Activated naive CD4-positive, alpha-beta T cell treated with anti-CD3 and anti-CD28 coated beads for 36 hours (primary cell): ENCODE measurements at regions of chr12 and their contacts with region 1.

Region 1: DNA sequence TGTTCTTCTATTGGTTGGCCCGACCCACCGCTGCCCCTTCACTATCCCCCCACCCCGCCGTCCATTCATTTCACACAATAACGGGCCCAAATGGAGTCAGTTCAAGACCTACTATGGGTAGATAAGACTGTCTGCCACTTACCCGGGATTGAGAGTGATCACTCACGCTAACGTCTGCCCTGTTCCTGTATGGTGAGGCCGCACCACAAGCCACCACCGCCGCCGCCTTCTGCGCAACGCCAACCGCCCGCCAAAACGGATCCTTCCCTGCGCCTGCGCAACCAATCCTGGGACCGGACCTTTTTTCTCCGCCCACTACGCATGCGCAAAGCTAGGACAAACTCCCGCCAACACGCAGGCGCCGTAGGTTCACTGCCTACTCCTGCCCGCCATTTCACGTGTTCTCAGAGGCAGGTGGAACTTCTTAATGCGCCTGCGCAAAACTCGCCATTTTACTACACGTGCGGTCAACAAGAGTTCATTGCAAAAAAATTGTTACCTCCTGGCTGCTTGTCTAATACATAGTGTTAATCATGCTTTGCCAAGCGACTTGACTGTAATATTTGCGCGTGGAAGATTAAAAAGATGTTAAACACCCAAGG is at the start of gene CBX5:
- DNase-seq: peak; percentile 100
- H3K4me3 Mint-ChIP-seq: no peak within 1 kb of the TSS
- H3K27ac Mint-ChIP-seq: no peak within 1 kb of the TSS
- H3K4me1 Mint-ChIP-seq: peaks cover 53% of the 10 kb centered on the region
- H3K27me3 Mint-ChIP-seq: no peaks in the 10 kb centered on the region
- total RNA-seq, gene CBX5: 169 to 173 TPM

Region 2: GRCh38 chr12:53379389-53380103 is 900.4 kb before region 1 on chr12:
- CTCF ChIA-PET with region 1: no interaction called
- intact Hi-C with region 1: loop called (anchors 1 kb)
- DNase-seq: peak; percentile 99
- H3K4me3 Mint-ChIP-seq: no peak overlapping the region
- H3K27ac Mint-ChIP-seq: no peak overlapping the region
- H3K4me1 Mint-ChIP-seq: peaks cover 48% of the 10 kb centered on the region
- H3K27me3 Mint-ChIP-seq: no peaks in the 10 kb centered on the region

Region 3: GRCh38 chr12:54082397-54082892 is 197.5 kb before region 1 on chr12:
- CTCF ChIA-PET with region 1: no interaction called
- intact Hi-C with region 1: loop called (anchors 5 kb)
- DNase-seq: peak; percentile 58
- H3K4me3 Mint-ChIP-seq: peak overlapping the region; percentile 75
- H3K27ac Mint-ChIP-seq: peak overlapping the region; percentile 10
- H3K4me1 Mint-ChIP-seq: peaks cover 23% of the 10 kb centered on the region
- H3K27me3 Mint-ChIP-seq: no peaks in the 10 kb centered on the region

Region 4: DNA sequence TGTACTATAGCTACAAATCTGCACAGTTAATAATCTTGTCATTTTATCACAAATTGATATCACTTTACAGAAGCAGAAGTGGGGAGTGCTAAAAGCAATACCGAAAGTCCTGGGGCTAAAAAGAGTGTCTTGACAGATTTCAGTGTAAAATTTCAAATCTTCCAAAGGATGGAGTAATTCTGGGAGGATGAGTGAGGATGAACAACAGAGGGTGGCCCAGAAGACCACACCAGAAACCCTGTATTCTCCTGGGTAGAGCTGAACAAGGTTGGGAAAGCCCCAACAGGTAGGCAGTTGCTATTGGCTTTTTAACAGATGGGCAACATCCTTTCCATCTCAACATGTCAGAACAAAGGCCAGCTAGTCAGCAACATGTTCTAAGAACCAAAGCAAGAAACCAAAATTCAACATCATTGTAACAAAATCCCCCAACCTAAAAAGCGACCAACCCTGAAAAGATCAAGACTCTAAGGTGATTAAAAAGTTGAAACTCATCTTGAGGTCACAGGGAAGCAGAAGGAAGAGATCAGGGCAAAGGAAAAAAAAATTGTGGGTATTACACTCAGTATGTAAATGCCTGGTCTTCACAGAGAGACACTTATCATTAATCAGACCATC is 38.9 kb before region 1 on chr12:
- CTCF ChIA-PET with region 1: no interaction called
- intact Hi-C with region 1: loop called (anchors 1 kb)
- DNase-seq: peak; percentile 16
- H3K4me3 Mint-ChIP-seq: no peak overlapping the region
- H3K27ac Mint-ChIP-seq: peak overlapping the region; percentile 80
- H3K4me1 Mint-ChIP-seq: peaks cover 16% of the 10 kb centered on the region
- H3K27me3 Mint-ChIP-seq: no peaks in the 10 kb centered on the region

Region 5: DNA sequence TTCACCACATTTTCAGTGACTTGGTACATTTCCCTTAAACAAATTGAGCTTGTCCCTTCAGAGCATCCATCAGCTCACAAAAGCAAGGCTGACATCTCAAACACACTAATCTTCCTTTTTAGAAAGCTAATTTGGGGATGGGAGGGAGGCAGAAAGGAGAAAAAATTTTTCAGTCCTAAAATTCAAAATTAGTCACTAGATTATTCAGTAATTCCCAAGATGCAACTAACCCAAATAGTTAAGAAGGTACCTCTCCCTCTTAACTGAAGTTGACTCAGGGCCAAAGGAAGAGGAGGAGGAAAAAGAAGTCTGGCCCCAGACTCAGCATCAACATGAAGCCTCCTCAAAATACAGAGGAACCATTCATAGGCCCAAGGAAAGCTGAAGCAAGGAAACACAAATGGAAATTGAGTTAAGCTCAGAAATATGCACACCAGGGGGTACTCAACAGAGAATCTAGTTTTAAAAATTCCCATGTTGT is 21.7 kb before region 1 on chr12:
- CTCF ChIA-PET with region 1: no interaction called
- intact Hi-C with region 1: no loop called
- DNase-seq: no peak
- H3K4me3 Mint-ChIP-seq: no peak overlapping the region
- H3K27ac Mint-ChIP-seq: no peak overlapping the region
- H3K4me1 Mint-ChIP-seq: peaks cover 35% of the 10 kb centered on the region
- H3K27me3 Mint-ChIP-seq: no peaks in the 10 kb centered on the region

Region 6: DNA sequence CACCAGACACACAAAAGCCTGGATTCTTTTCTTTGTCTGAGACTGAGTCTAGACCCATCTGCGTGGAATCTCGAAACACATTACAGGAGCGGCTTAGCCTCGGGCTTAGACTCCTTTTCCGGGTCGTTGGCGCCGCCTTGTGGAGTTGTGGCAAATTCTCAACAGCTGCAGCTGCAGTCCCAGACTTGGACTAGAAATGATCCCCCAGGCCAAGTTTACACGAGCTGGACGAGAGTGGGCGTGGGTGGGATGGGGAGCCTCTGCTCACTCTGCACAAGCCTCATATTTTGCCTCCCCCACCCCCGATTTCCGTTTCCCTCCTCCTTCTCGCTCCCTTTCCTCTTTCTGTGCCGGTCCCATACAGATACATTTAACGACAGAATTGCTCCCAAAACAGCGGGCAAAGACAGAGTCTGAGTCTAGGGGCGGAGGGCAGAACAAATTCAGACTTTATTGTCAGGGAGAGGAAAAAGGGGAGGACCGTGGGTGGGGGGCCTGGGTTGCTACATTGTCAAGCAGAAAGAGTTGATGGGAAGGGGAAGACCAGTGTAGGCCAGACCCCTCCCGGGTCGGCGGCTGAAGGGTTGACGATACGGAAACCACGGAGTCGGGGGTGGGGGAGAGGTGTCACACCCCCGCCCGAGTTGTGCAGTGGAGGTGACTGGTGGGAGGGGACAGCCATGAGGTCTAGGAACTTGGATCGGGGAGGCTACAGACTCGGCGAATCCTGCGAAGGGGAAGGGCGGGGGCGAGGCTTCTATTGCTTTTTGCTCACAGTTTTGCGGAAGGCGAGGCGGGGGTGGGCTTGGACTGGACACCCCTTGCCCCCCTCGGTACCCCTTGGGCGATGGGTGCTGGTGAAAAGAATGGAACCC is 89.0 kb after region 1 on chr12:
- CTCF ChIA-PET with region 1: no interaction called
- intact Hi-C with region 1: loop called (anchors 1 kb)
- DNase-seq: peak; percentile 97
- H3K4me3 Mint-ChIP-seq: peak overlapping the region; percentile 23
- H3K27ac Mint-ChIP-seq: no peak overlapping the region
- H3K4me1 Mint-ChIP-seq: peaks cover 41% of the 10 kb centered on the region
- H3K27me3 Mint-ChIP-seq: no peaks in the 10 kb centered on the region

Region 7: GRCh38 chr12:54984658-54985376 is 704.9 kb after region 1 on chr12 and contains the start of gene TESPA1:
- CTCF ChIA-PET with region 1: no interaction called
- intact Hi-C with region 1: loop called (anchors 1 kb)
- DNase-seq: peak; percentile 94
- H3K4me3 Mint-ChIP-seq: peak within 1 kb of the TSS; percentile 75
- H3K27ac Mint-ChIP-seq: peak within 1 kb of the TSS; percentile 89
- H3K4me1 Mint-ChIP-seq: peaks cover 56% of the 10 kb centered on the region
- H3K27me3 Mint-ChIP-seq: no peaks in the 10 kb centered on the region
- total RNA-seq, gene TESPA1: 43.9 to 45.1 TPM